ENCODE measurements at regions of chr19 and their contacts with region 1.

Region 1: DNA sequence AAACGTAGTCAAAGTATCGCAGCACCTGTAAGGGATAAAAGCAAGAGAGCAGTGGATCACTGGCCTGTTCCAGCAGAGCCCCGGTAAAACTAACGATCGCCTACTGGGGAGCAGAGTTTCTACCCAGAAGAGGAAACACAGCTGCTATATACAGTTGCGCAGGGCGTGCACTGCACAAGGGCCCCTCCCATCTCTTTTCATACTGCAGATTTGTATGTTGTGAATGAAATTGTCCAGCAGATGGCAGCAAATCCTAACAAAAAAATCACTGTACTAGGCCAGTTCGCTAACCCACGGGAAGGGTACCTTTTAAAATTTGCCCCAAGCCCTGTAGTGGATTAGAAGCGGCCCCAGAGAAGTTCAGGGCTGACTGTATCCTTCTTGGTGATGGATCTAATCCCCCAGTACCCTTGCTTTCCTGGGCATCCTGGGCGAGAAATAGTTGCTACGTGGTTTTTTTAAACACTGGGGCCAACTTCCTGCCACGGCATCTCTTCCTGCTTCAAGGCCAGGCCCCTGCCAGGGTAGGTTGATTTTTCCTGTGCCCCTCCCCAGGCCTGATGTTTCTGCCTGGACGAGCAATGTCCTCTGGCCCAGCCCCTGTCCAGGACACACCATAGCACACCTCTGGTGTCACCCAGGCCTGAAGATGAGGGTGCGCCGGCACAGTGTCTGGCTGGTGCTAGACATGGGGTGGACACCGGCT is 127.0 kb downstream of the IER2 start:
- DNase-seq: peak; percentile 47 to 90
- ATAC-seq: peak; percentile 90 to 93 (median 93)
- H3K4me3 ChIP-seq: no peak overlapping the region
- H3K4me3 Mint-ChIP-seq: peak overlapping the region; percentile 13
- H3K27ac ChIP-seq: peak overlapping the region; percentile 39
- H3K27ac Mint-ChIP-seq: peak overlapping the region; percentile 64 to 72
- H3K4me1 ChIP-seq: peaks cover 10% of the 10 kb centered on the region
- H3K4me1 Mint-ChIP-seq: peaks cover 0 to 6% of the 10 kb centered on the region in 2 donors
- H3K27me3 ChIP-seq: no peaks in the 10 kb centered on the region
- H3K27me3 Mint-ChIP-seq: peaks cover 0 to 3% of the 10 kb centered on the region in 2 donors
- CTCF ChIP-seq: peak; percentile 73

Region 2: GRCh38 chr19:13152974-13153629 is 124.2 kb before region 1 on chr19:
- intact Hi-C with region 1: no loop called
- DNase-seq: peak; percentile 98 to 99
- ATAC-seq: peak; percentile 19 to 52 (median 33)
- H3K4me3 ChIP-seq: peak overlapping the region; percentile 100
- H3K4me3 Mint-ChIP-seq: peak overlapping the region; percentile 99
- H3K27ac ChIP-seq: peak overlapping the region; percentile 90
- H3K27ac Mint-ChIP-seq: peak overlapping the region; percentile 99
- H3K4me1 ChIP-seq: peaks cover 63% of the 10 kb centered on the region
- H3K4me1 Mint-ChIP-seq: peaks cover 74 to 94% of the 10 kb centered on the region in 2 donors
- H3K27me3 ChIP-seq: no peaks in the 10 kb centered on the region
- H3K27me3 Mint-ChIP-seq: peaks cover 0 to 3% of the 10 kb centered on the region in 2 donors
- CTCF ChIP-seq: no peak

Region 3: DNA sequence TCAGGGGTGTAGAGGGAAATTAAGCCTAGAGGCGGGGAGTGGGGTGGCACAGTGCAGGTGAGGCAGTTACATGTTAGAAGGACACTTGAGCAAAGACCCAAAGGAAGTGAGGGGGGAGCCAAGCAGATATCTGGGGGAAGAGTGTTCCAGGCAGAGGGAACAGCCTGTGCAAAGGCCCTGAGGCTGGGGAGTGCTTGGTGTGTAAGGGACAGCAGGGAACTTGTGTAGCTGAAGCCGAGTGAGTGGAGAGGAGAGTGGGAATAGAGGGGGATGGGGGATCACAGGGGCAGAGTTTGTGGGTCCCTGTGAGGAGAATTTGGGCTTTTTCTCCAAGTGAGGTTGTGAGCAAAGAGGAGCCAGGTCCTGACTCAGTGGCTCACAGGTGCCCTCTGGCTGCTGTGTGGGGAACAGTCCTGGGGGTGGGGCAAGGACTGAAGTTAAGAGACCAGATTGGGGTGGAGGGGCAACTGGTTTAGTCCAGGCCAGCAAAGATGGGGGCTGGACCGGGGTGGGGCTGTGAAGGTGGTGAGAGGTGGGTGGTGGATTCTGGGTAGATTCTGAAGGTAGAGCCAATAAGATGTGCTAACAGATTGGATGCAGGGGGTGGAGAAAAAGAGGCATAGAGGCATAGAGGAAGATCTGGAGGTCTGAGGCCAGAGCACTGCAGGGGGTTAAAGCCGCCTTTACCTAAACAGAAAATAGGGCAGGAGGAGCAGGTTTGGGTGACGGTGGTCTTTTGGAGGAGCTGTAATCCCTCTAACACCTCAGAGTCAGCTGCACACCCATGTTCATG is 153.7 kb after region 1 on chr19:
- intact Hi-C with region 1: loop called (anchors 1 kb)
- DNase-seq: peak; percentile 24 to 67
- ATAC-seq: peak; percentile 59 to 75 (median 61)
- H3K4me3 ChIP-seq: no peak overlapping the region
- H3K4me3 Mint-ChIP-seq: no peak overlapping the region
- H3K27ac ChIP-seq: no peak overlapping the region
- H3K27ac Mint-ChIP-seq: no peak overlapping the region
- H3K4me1 ChIP-seq: no peaks in the 10 kb centered on the region
- H3K4me1 Mint-ChIP-seq: no peaks in the 10 kb centered on the region
- H3K27me3 ChIP-seq: peaks cover 2% of the 10 kb centered on the region
- H3K27me3 Mint-ChIP-seq: peaks cover 0 to 7% of the 10 kb centered on the region in 2 donors
- CTCF ChIP-seq: peak; percentile 33

Region 4: GRCh38 chr19:13588957-13589833 is 311.9 kb after region 1 on chr19:
- intact Hi-C with region 1: loop called (anchors 1 kb)
- DNase-seq: peak; percentile 82 to 88
- ATAC-seq: peak; percentile 90 to 99 (median 95)
- H3K4me3 ChIP-seq: no peak overlapping the region
- H3K4me3 Mint-ChIP-seq: no peak overlapping the region
- H3K27ac ChIP-seq: no peak overlapping the region
- H3K27ac Mint-ChIP-seq: no peak overlapping the region
- H3K4me1 ChIP-seq: peaks cover 4% of the 10 kb centered on the region
- H3K4me1 Mint-ChIP-seq: no peaks in the 10 kb centered on the region
- H3K27me3 ChIP-seq: peaks cover 4% of the 10 kb centered on the region
- H3K27me3 Mint-ChIP-seq: peaks cover 7 to 11% of the 10 kb centered on the region in 2 donors
- CTCF ChIP-seq: peak; percentile 98

Measured in natural killer cell (primary cell).